OCI-LY7 (cell line): ENCODE measurements at regions of chr11 and their contacts with region 1.

Region 1: GRCh38 chr11:68003846-68004550 is at the start of gene UNC93B1:
- DNase-seq: peak; percentile 90
- H3K4me3 ChIP-seq: peak within 1 kb of the TSS; percentile 82
- H3K27ac ChIP-seq: peak within 1 kb of the TSS; percentile 89
- H3K4me1 ChIP-seq: peaks cover 57% of the 10 kb centered on the region
- CTCF ChIP-seq: no peak
- total RNA-seq, gene UNC93B1: 39.6 and 44.0 TPM in 2 replicates

Region 2: GRCh38 chr11:68017861-68018679 is 14.1 kb after region 1 on chr11:
- CTCF ChIA-PET with region 1: no interaction called
- POLR2A ChIA-PET with region 1: no interaction called
- intact Hi-C with region 1: no loop called
- DNase-seq: no peak
- H3K4me3 ChIP-seq: no peak overlapping the region
- H3K27ac ChIP-seq: no peak overlapping the region
- H3K4me1 ChIP-seq: no peaks in the 10 kb centered on the region
- CTCF ChIP-seq: no peak

Region 3: DNA sequence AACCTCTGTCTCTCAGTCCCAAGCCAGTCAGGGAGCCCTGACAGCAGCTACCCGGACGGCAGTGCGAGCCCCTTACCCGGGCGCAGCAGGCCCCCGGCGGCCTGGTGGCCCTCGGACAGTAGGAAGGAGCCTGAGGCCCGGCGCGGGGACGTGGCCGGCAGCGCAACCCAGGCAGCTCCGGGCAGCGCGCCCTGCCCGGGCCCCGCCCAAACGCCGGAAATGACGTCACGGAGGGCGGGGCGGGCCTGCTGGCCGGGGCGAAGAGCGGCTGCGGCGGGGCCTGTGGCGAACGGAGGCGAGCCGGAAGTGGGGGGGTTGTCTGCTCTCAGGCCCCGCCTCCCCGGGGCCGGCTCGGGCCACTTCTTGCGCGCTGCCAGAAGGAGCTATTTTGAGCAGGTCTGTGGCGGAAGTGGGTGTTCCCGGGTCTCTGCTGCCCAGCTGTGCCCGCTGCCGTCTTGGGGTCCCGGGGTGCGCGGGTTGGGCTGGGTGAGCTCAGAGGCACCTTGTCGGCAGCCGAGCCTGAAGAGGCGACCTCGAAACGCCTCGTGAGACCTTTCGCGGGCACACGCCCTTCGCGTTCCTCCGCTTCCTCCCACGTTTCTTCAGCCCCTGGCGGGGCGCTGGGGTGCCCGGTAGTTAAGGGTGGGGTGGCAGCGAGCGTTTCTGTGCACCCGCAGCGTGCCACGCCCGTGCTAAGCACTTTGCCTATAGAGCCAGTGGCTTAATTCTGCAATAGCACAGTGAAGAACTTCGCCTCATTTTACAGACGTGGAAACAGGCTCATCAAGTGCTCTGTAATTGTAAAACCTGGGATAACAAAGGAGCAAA is 268.0 kb after region 1 on chr11 and contains the start of gene C11orf24:
- CTCF ChIA-PET with region 1: no interaction called
- POLR2A ChIA-PET with region 1: no interaction called
- intact Hi-C with region 1: loop called (anchors 10 kb)
- DNase-seq: peak; percentile 98
- H3K4me3 ChIP-seq: peak within 1 kb of the TSS; percentile 83
- H3K27ac ChIP-seq: peak within 1 kb of the TSS; percentile 96
- H3K4me1 ChIP-seq: peaks cover 56% of the 10 kb centered on the region
- CTCF ChIP-seq: no peak
- total RNA-seq, gene C11orf24: 53.9 and 81.1 TPM in 2 replicates

Region 4: DNA sequence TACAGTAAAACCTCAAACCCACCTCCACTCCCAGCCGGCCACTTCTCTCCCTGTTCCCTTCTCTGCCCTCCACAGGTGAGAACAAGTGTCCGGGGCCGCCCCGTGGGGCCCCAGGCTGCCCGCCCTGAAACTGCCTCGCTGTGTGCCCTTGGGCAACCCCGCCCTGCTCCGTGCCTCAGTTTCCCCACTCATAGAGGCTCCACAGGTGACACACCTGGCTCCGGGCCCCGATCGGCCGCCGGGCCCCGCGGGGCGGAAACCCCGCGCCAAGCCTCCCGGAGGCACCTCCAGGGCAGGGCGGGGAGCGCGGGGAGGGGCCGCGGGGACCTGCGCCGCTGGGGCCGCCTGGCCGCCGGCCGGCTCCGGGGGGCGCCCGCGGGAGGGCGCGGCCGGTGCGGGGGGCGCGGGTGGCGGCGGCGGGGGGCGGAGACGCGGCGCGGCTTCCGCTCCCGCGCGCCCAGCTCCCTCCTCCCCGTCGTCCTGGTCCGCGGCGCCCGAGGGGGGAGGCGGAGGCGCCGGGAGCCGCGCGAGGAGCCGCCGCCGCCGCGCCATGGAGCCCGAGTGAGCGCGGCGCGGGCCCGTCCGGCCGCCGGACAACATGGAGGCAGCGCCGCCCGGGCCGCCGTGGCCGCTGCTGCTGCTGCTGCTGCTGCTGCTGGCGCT is 308.2 kb after region 1 on chr11 and contains the start of gene LRP5:
- CTCF ChIA-PET with region 1: no interaction called
- POLR2A ChIA-PET with region 1: no interaction called
- intact Hi-C with region 1: no loop called
- DNase-seq: peak; percentile 16
- H3K4me3 ChIP-seq: peak within 1 kb of the TSS; percentile 46
- H3K27ac ChIP-seq: no peak within 1 kb of the TSS
- H3K4me1 ChIP-seq: no peaks in the 10 kb centered on the region
- CTCF ChIP-seq: no peak
- total RNA-seq, gene LRP5: 0.59 and 0.60 TPM in 2 replicates

Region 5: GRCh38 chr11:69131644-69132300 is 1127.8 kb after region 1 on chr11:
- CTCF ChIA-PET with region 1: no interaction called
- POLR2A ChIA-PET with region 1: no interaction called
- intact Hi-C with region 1: no loop called
- DNase-seq: no peak
- H3K4me3 ChIP-seq: no peak overlapping the region
- H3K27ac ChIP-seq: no peak overlapping the region
- H3K4me1 ChIP-seq: no peaks in the 10 kb centered on the region
- CTCF ChIP-seq: no peak; the same call in 1 of the 2 replicates